Gastrocnemius medialis (tissue), 4 donors: ENCODE measurements at regions of chr14 and their contacts with region 1.

Region 1: DNA sequence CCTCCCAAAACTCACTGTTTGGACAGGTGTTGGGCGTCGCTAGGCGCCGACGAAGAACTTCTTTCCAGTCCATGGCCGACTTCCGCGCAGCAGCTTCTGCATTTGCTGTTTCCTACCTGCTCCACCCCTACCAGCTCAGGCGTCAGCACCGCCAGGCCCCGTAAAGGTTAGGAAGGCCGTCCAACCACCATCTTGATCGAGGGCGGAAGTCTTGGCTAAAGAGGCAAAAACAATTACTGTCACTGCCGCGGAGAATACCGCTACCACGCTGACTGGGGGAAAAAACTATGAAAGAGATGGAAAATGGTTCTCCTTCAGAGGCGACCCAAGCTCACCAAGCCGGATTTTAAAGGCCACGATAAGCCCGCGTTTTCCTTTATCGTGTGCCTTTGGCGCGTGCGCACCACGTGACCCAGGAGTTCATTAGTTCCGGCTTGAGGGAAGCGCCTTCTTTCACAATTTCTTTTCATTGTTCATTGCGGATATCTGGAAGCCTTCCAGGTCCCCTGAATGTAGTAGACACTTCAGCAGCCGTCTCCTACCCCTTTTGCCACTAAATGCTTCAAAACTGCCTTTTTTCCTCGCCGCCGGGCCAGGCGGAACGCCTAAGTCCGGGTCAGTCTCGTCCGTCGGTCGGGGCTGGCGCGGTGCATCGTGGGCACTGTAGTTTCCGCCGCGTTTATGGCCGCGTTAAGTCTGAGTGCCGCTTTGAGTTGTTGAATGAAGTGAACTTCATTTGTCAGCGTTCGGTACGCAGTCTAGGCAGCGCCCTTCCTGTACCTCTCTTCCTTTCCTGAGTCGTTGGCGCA is at the starts of genes PPP2R3C and PRORP:
- DNase-seq: peak; percentile 93
- ATAC-seq: peak; percentile 89 to 93
- H3K4me3 ChIP-seq: peak within 1 kb of the TSS; percentile 77 to 95 (median 87)
- H3K27ac ChIP-seq: peak within 1 kb of the TSS; percentile 94 to 98 (median 97)
- H3K4me1 ChIP-seq: peaks cover 18 to 24% of the 10 kb centered on the region in 2 donors
- H3K27me3 ChIP-seq: no peaks in the 10 kb centered on the region
- CTCF ChIP-seq: no peak
- POLR2A ChIP-seq: peak; percentile 56 to 64
- total RNA-seq, gene PPP2R3C: 27.9 to 59.4 (median 33.2) TPM
- total RNA-seq, gene PRORP: 14.8 to 21.8 (median 20.0) TPM

Region 2: DNA sequence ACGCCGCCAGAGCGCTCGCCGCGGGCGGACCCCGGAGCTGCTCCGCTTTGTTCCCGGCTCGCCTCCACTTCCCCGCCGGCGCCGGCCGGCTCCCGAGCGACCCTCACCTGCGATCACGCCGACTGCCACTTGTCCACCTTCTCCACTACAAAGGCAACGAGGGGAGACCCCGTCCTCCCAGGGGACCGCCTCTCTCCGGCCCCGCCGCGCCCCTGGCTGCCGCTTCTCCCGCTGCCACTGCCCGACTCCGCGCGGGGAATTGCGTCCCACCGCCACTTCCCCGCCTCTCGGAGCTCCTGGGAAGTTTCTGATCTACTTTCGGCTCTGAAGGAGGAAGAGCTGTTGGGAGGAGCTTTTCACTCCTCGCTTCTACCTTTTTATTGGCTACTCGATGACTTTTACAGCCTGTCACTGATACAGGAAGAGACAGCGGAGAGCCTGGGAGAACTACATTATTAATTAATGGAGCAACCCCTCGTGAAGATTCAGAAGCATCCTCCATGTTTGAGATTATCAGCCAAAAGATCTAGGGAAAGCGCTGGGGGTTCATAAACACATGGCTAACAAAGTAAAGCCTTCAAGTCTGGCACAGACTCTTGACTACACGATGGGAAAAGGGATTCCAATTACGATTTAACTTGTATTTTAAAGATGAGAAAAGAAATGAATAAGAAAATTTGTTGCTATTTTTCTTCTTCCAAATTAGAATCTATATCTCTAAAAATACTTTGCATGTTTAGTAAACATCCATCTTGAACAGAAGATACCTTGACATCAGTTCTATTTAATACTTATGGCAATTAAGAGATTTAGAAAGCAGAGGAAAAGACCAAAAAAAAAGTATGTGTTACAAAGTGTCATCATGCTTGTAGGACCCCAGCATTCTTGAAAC is 246.8 kb before region 1 on chr14 and contains the start of gene BAZ1A:
- in situ Hi-C with region 1: no loop called
- intact Hi-C with region 1: loop called (anchors 5 kb)
- DNase-seq: peak; percentile 42 to 61
- ATAC-seq: peak; percentile 62
- H3K4me3 ChIP-seq: peak within 1 kb of the TSS; percentile 82 to 98 (median 90)
- H3K27ac ChIP-seq: peak within 1 kb of the TSS; percentile 98 to 100 (median 100)
- H3K4me1 ChIP-seq: peaks cover 16 to 17% of the 10 kb centered on the region in 2 donors
- H3K27me3 ChIP-seq: no peaks in the 10 kb centered on the region
- CTCF ChIP-seq: peak in 3 of 5 experiments; percentile 13 to 42 (median 37)
- POLR2A ChIP-seq: peak; percentile 84 to 95
- total RNA-seq, gene BAZ1A: 11.6 to 18.5 (median 14.7) TPM

Region 3: GRCh38 chr14:35046048-35046741 is 75.9 kb before region 1 on chr14 and contains the start of gene FAM177A1:
- in situ Hi-C with region 1: no loop called
- intact Hi-C with region 1: loop called (anchors 2 kb)
- DNase-seq: peak; percentile 95 to 97
- ATAC-seq: peak; percentile 81 to 90
- H3K4me3 ChIP-seq: peak within 1 kb of the TSS; percentile 77 to 94 (median 88)
- H3K27ac ChIP-seq: peak within 1 kb of the TSS; percentile 90 to 98 (median 94)
- H3K4me1 ChIP-seq: peaks cover 37 to 40% of the 10 kb centered on the region in 2 donors
- H3K27me3 ChIP-seq: no peaks in the 10 kb centered on the region
- CTCF ChIP-seq: no peak
- POLR2A ChIP-seq: peak; percentile 91 to 94
- total RNA-seq, gene FAM177A1: 13.5 to 35.8 (median 21.8) TPM

Region 4: GRCh38 chr14:35261774-35262173 is 139.7 kb after region 1 on chr14:
- in situ Hi-C with region 1: no loop called
- intact Hi-C with region 1: no loop called
- DNase-seq: no peak
- ATAC-seq: peak in 1 of 2 donors; percentile 78
- H3K4me3 ChIP-seq: no peak overlapping the region
- H3K27ac ChIP-seq: no peak overlapping the region
- H3K4me1 ChIP-seq: peaks cover 0 to 5% of the 10 kb centered on the region in 2 donors
- H3K27me3 ChIP-seq: no peaks in the 10 kb centered on the region
- CTCF ChIP-seq: peak in 3 of 5 experiments; percentile 14 to 52 (median 43)
- POLR2A ChIP-seq: no peak

Region 5: GRCh38 chr14:35301735-35302528 is 179.8 kb after region 1 on chr14:
- in situ Hi-C with region 1: loop called in 1 of 4 experiments (anchors 10 kb)
- intact Hi-C with region 1: no loop called
- DNase-seq: no peak
- ATAC-seq: peak; percentile 46 to 49
- H3K4me3 ChIP-seq: peak overlapping the region in 1 of 4 donors; percentile 4
- H3K27ac ChIP-seq: peak overlapping the region; percentile 55 to 85 (median 80)
- H3K4me1 ChIP-seq: peaks cover 21 to 47% of the 10 kb centered on the region in 2 donors
- H3K27me3 ChIP-seq: no peaks in the 10 kb centered on the region
- CTCF ChIP-seq: no peak
- POLR2A ChIP-seq: no peak

Region 6: DNA sequence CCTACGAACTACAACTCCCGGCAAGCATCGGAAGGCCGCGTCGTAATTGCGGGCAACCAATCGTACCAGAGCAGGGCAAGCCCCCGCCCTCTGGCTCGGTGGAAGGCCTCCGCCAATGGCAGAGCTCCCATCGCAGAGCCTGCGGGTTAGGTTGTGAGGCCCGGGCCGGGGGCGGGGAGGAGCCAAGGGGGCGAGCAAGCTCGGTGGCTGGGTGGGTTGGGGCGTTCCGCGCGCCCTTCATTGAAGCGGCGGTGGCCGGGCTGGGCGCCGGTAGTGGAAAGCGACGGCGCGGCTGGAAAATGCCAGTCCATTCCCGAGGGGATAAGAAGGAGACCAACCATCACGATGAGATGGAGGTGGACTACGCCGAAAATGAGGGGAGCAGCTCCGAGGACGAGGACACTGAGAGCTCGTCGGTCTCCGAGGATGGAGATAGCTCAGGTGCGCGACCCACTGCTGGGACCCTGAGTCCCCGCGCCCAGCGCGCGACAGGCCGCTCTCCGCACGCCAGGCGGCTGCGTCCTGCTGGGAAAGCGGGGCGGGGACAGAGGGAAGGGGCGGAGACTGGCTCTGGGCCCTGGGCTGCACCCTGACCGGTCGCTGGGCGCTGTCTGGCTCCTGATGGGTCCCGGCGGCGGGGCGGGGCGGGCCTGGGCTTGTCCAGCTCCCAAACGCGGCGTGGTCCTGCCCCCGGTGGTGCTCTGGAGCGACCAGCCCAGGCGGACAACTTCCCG is 704.3 kb after region 1 on chr14 and contains the start of gene BRMS1L:
- in situ Hi-C with region 1: no loop called
- intact Hi-C with region 1: loop called (anchors 10 kb)
- DNase-seq: peak; percentile 96 to 98
- ATAC-seq: peak; percentile 97 to 98
- H3K4me3 ChIP-seq: peak within 1 kb of the TSS; percentile 74 to 91 (median 88)
- H3K27ac ChIP-seq: peak within 1 kb of the TSS; percentile 89 to 98 (median 96)
- H3K4me1 ChIP-seq: peaks cover 0 to 15% of the 10 kb centered on the region in 2 donors
- H3K27me3 ChIP-seq: no peaks in the 10 kb centered on the region
- CTCF ChIP-seq: peak in 2 of 5 experiments; percentile 31 to 44
- POLR2A ChIP-seq: peak; percentile 87 to 92
- total RNA-seq, gene BRMS1L: 4.6 to 6.8 (median 6.1) TPM